ENCODE measurements at regions of chr22 and their contacts with region 1.

Region 1: DNA sequence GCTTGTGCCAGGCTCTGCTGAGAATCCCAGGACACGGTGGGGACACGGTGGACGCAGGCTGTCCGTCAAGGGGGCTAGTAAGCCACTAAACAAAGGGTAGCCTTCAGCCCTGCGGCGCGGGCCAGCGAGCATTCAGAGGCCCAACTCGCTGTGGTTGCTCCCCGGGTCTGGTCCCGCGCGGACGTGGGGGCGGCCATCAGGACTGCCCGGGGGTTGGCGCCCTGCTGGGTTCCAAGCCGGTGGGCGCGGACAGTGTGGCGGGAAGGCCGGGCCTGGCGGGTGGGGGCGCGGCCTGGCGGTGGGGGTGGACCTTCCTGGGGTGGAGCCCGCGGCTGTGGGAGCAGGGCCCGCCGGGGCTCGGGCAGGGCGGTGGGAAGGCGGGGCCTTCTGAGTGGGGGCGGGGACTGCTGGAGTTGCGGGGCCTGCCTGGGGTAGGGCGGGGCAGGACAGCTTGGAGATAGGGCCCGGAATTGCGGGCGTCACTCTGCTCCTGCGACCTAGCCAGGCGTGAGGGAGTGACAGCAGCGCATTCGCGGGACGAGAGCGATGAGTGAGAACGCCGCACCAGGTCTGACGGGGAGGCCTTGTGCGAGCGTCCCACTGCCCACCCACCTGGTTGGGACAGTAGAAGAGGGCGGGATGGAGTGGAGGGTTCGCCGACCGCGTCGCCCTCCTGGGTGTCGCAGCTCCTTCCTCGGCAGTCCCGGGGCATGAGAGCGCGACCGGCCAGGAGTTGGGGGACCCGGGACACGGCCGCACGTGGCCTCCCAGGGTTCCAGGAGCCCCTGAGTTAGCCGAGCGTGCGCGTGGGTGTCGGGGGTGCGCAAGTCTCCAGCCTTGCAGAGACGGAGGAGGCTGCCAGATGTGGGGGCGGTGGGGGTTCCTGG is at the start of gene SERHL2:
- DNase-seq: peak; percentile 47
- H3K4me3 ChIP-seq: peak within 1 kb of the TSS; percentile 17 to 53 (median 48)
- H3K27ac ChIP-seq: no peak within 1 kb of the TSS
- H3K4me1 ChIP-seq: peaks cover 3% of the 10 kb centered on the region
- H3K27me3 ChIP-seq: no peaks in the 10 kb centered on the region
- CTCF ChIP-seq: no peak
- total RNA-seq, gene SERHL2: 1.7 to 2.3 TPM

Region 2: GRCh38 chr22:42533638-42533977 is 20.1 kb before region 1 on chr22:
- CTCF ChIA-PET with region 1: no interaction called
- dilution Hi-C with region 1: no loop called
- in situ Hi-C with region 1: no loop called
- intact Hi-C with region 1: loop called (anchors 2 kb)
- DNase-seq: no peak
- H3K4me3 ChIP-seq: no peak overlapping the region
- H3K27ac ChIP-seq: no peak overlapping the region
- H3K4me1 ChIP-seq: no peaks in the 10 kb centered on the region
- H3K27me3 ChIP-seq: no peaks in the 10 kb centered on the region
- CTCF ChIP-seq: no peak